Ascending aorta (tissue), 2 donors: ENCODE measurements at regions of chr17 and their contacts with region 1.

Region 1: GRCh38 chr17:7239091-7240027 is at the start of gene PHF23:
- DNase-seq: peak; percentile 99 to 100
- H3K4me3 ChIP-seq: peak within 1 kb of the TSS; percentile 92 to 99
- H3K27ac ChIP-seq: peak within 1 kb of the TSS; percentile 88 to 96
- H3K4me1 ChIP-seq: peaks cover 12 to 25% of the 10 kb centered on the region in 2 donors
- H3K27me3 ChIP-seq: no peaks in the 10 kb centered on the region
- CTCF ChIP-seq: peak in 1 of 3 experiments; percentile 37
- total RNA-seq, gene PHF23: 13.3 TPM

Region 2: DNA sequence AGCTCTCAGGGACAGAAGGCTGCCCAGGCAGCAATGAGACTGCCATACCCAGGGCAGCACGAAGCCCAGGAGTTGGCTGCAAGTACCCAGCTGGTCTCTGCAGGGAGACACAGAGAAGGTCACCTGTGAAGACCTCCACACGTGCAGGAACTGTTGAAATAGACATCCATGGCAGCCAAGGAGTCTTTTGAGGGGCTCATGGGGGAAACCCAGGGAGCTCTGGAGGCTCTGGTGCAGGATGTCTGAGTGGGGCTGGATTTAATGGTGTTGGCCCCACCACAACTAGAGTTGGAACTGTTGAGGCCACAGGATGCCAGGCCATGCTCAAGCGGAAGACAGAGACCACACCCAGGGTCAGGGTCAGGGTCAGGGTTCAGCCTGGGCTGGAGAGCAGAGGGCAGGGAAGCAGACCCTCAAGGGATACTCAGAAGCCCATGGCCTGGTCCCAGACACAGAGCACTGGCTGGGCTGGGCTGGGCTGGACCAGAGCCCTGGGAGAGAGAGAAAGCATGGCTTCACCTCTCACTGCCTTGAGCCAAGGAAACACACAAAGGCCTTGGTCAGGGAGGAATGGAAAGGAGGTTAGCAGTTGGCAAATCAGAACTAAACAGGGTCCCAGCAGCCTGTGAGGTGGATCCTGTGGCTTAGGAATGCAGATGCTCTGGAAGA is 704.4 kb before region 1 on chr17:
- intact Hi-C with region 1: no loop called
- DNase-seq: peak in 1 of 2 donors; percentile 52
- H3K4me3 ChIP-seq: no peak overlapping the region
- H3K27ac ChIP-seq: no peak overlapping the region
- H3K4me1 ChIP-seq: no peaks in the 10 kb centered on the region
- H3K27me3 ChIP-seq: no peaks in the 10 kb centered on the region
- CTCF ChIP-seq: no peak

Region 3: GRCh38 chr17:7122381-7122780 is 117.0 kb before region 1 on chr17:
- intact Hi-C with region 1: no loop called
- DNase-seq: no peak
- H3K4me3 ChIP-seq: no peak overlapping the region
- H3K27ac ChIP-seq: no peak overlapping the region
- H3K4me1 ChIP-seq: no peaks in the 10 kb centered on the region
- H3K27me3 ChIP-seq: no peaks in the 10 kb centered on the region
- CTCF ChIP-seq: no peak

Region 4: GRCh38 chr17:7219812-7220581 is 19.4 kb before region 1 on chr17 and contains the starts of genes ACADVL and DLG4:
- intact Hi-C with region 1: loop called (anchors 1 kb)
- DNase-seq: peak; percentile 78 to 96
- H3K4me3 ChIP-seq: peak within 1 kb of the TSS; percentile 81 to 98
- H3K27ac ChIP-seq: peak within 1 kb of the TSS; percentile 96 to 100
- H3K4me1 ChIP-seq: peaks cover 23 to 40% of the 10 kb centered on the region in 2 donors
- H3K27me3 ChIP-seq: no peaks in the 10 kb centered on the region
- CTCF ChIP-seq: no peak
- total RNA-seq, gene ACADVL: 1,048 TPM
- total RNA-seq, gene DLG4: 34.9 TPM

Region 5: DNA sequence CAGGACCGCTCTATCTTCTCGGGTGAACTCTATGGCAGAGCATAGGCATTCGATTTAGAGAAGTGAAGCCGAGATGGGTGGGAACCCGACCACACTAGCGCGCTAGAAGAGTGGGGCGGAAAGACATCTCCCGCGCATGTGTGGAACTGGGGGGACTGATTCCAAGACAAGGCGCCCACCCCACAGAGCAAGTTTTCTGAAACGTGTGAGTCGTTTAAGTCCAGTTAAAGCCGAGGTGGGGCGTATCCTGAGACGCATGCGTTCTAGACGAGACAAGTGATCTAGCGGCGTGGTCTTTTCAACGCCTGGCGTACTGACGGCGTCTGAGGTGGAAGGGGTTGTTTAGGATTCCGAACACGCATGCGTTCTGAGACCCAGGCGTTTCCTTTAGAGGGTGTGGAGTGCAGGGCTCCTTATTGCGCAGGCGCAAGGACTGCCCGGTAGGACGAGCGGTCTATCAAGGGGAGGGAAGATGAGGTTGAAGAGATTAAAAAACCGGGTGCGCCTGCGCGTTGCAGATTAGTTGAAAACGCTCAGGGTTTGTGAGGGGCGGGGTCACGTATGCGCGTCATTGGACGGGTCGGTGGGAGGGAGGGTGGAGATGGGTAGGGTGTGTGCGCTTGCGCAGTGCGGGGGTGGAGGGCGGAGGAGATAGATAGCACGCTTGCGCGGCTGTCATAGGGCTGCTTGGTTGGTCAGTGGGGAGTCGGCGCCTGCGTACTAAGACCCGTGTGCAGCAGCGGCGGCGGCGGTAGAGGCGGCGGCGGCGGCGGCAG is 67.7 kb after region 1 on chr17 and contains the start of gene EIF5A:
- intact Hi-C with region 1: loop called (anchors 1 kb)
- DNase-seq: peak; percentile 98 to 99
- H3K4me3 ChIP-seq: peak within 1 kb of the TSS; percentile 76 to 99
- H3K27ac ChIP-seq: peak within 1 kb of the TSS; percentile 97 to 100
- H3K4me1 ChIP-seq: peaks cover 3 to 26% of the 10 kb centered on the region in 2 donors
- H3K27me3 ChIP-seq: no peaks in the 10 kb centered on the region
- CTCF ChIP-seq: no peak
- total RNA-seq, gene EIF5A: 248 TPM

Region 6: GRCh38 chr17:7844292-7845154 is 605.2 kb after region 1 on chr17:
- intact Hi-C with region 1: loop called (anchors 5 kb)
- DNase-seq: peak; percentile 81 to 97
- H3K4me3 ChIP-seq: peak overlapping the region; percentile 80 to 88
- H3K27ac ChIP-seq: peak overlapping the region; percentile 97 to 99
- H3K4me1 ChIP-seq: peaks cover 6 to 18% of the 10 kb centered on the region in 2 donors
- H3K27me3 ChIP-seq: no peaks in the 10 kb centered on the region
- CTCF ChIP-seq: no peak